ENCODE measurements at regions of chr2 and their contacts with region 1.

Region 1: DNA sequence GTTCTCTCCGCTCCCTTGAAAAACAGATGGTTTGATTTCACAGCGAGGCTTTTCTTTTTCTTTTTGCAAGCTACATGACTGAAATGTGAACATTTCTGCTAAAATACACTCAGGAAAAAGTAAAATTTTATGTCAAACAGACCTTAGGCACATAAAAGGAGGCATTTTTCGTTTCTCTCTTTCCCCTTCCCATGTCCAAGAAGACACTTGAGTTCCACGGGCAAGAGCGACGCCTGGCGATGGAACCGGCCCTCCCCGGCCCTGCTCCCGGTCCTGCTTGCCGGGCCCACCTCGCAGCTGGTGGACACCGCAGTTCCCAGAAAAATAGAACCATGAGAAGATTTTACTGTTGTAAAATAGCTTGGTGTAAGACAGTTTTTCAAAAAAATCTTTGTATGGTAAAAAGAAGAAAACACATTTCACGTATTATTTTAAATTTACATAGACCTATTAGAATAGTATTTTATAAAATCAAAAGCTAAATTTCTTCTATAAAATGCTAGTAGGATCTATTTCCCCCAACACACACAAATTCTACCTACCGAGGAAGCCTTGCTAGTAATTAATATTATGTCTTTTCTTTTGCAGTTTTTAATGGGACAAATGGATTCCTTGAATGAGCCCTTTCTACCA is 2.3 kb upstream of the ALKAL2 start:
- DNase-seq: peak; percentile 45
- ATAC-seq: peak; percentile 90
- H3K4me3 ChIP-seq: peak overlapping the region; percentile 43 to 63
- H3K27ac ChIP-seq: no peak overlapping the region
- H3K4me1 ChIP-seq: no peaks in the 10 kb centered on the region; the same call in 1 of the 2 replicates
- H3K27me3 ChIP-seq: peaks cover 16% of the 10 kb centered on the region
- CTCF ChIP-seq: peak; percentile 94

Region 2: GRCh38 chr2:46471-47345 is 243.5 kb before region 1 on chr2 and contains the start of gene FAM110C:
- CTCF ChIA-PET with region 1: no interaction called
- POLR2A ChIA-PET with region 1: no interaction called
- in situ Hi-C with region 1: no loop called
- intact Hi-C with region 1: no loop called
- DNase-seq: no peak
- ATAC-seq: peak; percentile 68
- H3K4me3 ChIP-seq: peak within 1 kb of the TSS; percentile 28 to 46
- H3K27ac ChIP-seq: no peak within 1 kb of the TSS
- H3K4me1 ChIP-seq: peaks cover 9% of the 10 kb centered on the region; the same call in 1 of the 2 replicates
- H3K27me3 ChIP-seq: peaks cover 23% of the 10 kb centered on the region
- CTCF ChIP-seq: no peak
- total RNA-seq, gene FAM110C: 0.13 TPM

Region 3: DNA sequence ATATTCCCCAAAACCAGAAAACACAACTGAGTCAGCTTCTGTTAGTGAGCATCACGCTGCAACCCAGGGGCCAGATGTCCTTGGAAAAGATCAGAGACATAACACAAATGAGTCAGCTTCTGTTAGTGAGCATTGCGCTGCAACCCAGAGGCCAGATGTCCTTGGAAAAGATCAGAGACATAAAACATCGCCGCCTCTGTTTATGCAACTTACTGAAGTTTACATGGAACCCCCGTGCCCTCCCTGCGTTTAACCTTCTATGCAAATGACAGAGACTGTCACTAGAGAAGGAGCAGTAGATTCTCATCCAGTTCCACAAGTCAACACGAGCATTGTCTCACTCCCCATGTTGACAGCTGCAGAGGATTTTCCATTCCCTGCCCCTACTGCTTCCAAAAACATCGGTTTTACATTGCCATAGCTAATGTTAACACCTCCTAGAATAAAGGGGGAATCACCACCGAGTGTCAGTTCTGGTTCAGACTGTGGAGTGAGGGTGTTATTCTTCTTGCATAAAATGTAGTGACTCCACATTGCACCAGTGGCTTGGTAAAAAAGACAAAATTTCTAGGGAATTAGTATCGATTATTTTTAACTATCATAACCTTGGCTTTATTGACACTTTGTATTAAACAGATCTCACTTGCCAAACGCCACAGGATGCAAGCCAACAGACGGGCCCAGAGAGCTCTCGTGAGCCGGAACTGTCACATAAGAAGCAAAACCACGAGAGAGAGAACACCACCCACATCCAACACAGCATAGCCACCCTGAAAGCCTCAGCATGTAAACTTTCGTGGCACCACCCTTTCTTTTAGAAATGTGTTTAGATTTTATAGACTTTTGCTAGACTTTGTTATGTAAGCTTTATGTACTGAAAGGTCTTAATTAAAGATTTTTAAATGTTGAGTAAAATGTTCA is 114.1 kb before region 1 on chr2:
- CTCF ChIA-PET with region 1: no interaction called
- POLR2A ChIA-PET with region 1: no interaction called
- in situ Hi-C with region 1: no loop called
- intact Hi-C with region 1: loop called (anchors 2 kb)
- DNase-seq: no peak
- ATAC-seq: no peak
- H3K4me3 ChIP-seq: no peak overlapping the region
- H3K27ac ChIP-seq: no peak overlapping the region
- H3K4me1 ChIP-seq: no peaks in the 10 kb centered on the region
- H3K27me3 ChIP-seq: 0 out of 2 replicates have a peak, but pooled peaks cover 2% of the 10 kb centered on the region
- CTCF ChIP-seq: no peak

Region 4: GRCh38 chr2:223971-224760 is 66.0 kb before region 1 on chr2:
- CTCF ChIA-PET with region 1: no interaction called
- POLR2A ChIA-PET with region 1: no interaction called
- in situ Hi-C with region 1: no loop called
- intact Hi-C with region 1: no loop called
- DNase-seq: no peak
- ATAC-seq: no peak
- H3K4me3 ChIP-seq: no peak overlapping the region
- H3K27ac ChIP-seq: no peak overlapping the region
- H3K4me1 ChIP-seq: no peaks in the 10 kb centered on the region
- H3K27me3 ChIP-seq: no peaks in the 10 kb centered on the region
- CTCF ChIP-seq: no peak

Region 5: DNA sequence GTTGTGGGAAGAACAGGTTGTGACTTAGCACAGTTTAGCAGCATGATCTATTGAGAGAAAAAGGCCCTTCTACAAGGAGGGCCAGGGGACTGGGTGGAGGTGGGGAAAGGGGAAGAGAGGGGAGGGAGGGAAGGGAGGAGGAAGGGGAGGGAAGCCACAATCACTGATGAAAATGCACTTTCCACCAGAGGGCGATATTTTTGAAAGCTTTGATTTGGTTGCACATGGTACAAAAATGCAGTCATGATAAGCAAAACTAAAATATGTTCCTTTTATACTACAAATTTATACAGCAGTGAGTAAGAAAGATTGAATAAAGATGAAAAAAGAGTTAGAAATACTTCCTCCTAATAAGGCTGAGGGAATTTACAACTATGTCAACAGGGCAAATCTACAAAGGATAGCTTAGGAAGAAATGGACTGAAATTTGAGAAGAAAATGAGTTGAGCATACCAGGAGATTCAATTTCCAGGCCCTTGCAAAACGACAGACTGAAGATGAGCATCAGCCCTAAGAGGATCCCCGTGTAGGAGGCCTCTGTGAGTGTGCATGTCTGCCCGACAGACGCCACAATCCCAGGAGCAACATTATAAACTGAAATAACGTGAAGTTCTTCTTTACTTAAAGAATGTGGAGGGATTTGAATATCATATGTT is 43.6 kb before region 1 on chr2:
- CTCF ChIA-PET with region 1: no interaction called
- POLR2A ChIA-PET with region 1: no interaction called
- in situ Hi-C with region 1: no loop called
- intact Hi-C with region 1: loop called (anchors 5 kb)
- DNase-seq: peak; percentile 7
- ATAC-seq: peak; percentile 74; the same call in 1 of the 2 replicates
- H3K4me3 ChIP-seq: no peak overlapping the region
- H3K27ac ChIP-seq: no peak overlapping the region
- H3K4me1 ChIP-seq: no peaks in the 10 kb centered on the region
- H3K27me3 ChIP-seq: no peaks in the 10 kb centered on the region
- CTCF ChIP-seq: peak; percentile 74

Region 6: DNA sequence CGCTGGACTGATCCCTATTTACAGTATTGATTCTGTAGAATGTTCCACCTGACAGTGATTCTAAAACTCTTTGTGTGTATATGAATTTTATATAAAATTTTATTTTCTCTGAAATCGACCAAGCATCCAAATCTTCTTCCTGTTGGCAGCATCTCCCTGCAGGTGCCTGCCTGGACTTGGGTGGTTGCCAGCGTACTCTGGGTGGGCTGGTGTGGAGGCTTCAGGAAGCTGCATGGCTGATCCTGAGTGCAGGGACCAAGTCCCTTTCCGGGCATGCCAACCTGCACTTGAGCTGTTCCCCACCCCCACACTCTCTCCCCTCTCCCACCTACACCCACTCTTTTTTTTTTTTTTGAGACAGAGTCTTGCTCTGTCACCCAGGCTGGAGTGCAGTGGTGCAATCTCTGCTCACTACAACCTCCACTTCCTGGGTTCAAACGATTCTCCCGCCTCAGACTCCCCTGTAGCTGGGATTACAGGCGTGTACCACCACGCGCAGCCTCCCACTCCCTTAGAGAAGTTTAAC is 50.9 kb after region 1 on chr2:
- CTCF ChIA-PET with region 1: no interaction called
- POLR2A ChIA-PET with region 1: no interaction called
- in situ Hi-C with region 1: no loop called
- intact Hi-C with region 1: no loop called
- DNase-seq: no peak
- ATAC-seq: no peak
- H3K4me3 ChIP-seq: no peak overlapping the region
- H3K27ac ChIP-seq: no peak overlapping the region
- H3K4me1 ChIP-seq: no peaks in the 10 kb centered on the region
- H3K27me3 ChIP-seq: peaks cover 2% of the 10 kb centered on the region
- CTCF ChIP-seq: no peak

Measured in Panc1 (cell line).